ENCODE measurements at regions of chr1 and their contacts with region 1.

Region 1: GRCh38 chr1:245348626-245349025 is 193.8 kb downstream of the KIF26B start:
- DNase-seq: no peak
- H3K4me3 Mint-ChIP-seq: no peak overlapping the region
- H3K27ac Mint-ChIP-seq: no peak overlapping the region
- H3K4me1 Mint-ChIP-seq: no peaks in the 10 kb centered on the region
- H3K27me3 Mint-ChIP-seq: peaks cover 34% of the 10 kb centered on the region
- CTCF ChIP-seq: no peak

Region 2: GRCh38 chr1:245361951-245362350 is 13.3 kb after region 1 on chr1:
- CTCF ChIA-PET with region 1: interaction called, 10 read pairs
- intact Hi-C with region 1: no loop called
- DNase-seq: no peak
- H3K4me3 Mint-ChIP-seq: no peak overlapping the region
- H3K27ac Mint-ChIP-seq: no peak overlapping the region
- H3K4me1 Mint-ChIP-seq: no peaks in the 10 kb centered on the region
- H3K27me3 Mint-ChIP-seq: no peaks in the 10 kb centered on the region
- CTCF ChIP-seq: no peak

Region 3: GRCh38 chr1:245666412-245666811 is 317.8 kb after region 1 on chr1:
- CTCF ChIA-PET with region 1: no interaction called
- intact Hi-C with region 1: no loop called
- DNase-seq: no peak
- H3K4me3 Mint-ChIP-seq: no peak overlapping the region
- H3K27ac Mint-ChIP-seq: no peak overlapping the region
- H3K4me1 Mint-ChIP-seq: no peaks in the 10 kb centered on the region
- H3K27me3 Mint-ChIP-seq: no peaks in the 10 kb centered on the region
- CTCF ChIP-seq: no peak